ENCODE measurements at regions of chr9 and their contacts with region 1.

Region 1: DNA sequence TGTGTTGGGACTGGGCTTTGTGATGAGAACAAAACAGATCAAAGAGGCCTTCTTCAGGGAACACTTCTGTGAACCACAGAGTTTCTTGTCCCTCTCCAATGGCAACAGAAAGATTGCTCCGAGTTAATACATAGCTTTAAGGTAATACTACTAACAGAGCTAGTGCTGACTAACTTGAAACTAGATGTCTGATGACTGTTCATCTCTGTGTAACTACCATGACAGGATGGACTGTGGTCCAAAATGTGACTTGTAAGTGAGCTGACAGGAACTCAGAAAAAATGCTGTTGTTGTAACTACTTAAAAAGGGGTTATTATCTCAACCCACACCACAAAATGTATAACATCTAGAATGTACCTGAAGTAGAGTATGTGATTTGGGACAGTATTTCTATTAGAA is 630.2 kb upstream of the DMAC1 start:
- DNase-seq: no peak
- H3K4me3 Mint-ChIP-seq: no peak overlapping the region
- H3K27ac Mint-ChIP-seq: peak overlapping the region; percentile 78
- H3K4me1 Mint-ChIP-seq: peaks cover 40% of the 10 kb centered on the region
- H3K27me3 Mint-ChIP-seq: no peaks in the 10 kb centered on the region

Region 2: GRCh38 chr9:6894135-6894534 is 1535.6 kb before region 1 on chr9:
- intact Hi-C with region 1: loop called (anchors 5 kb)
- DNase-seq: no peak
- H3K4me3 Mint-ChIP-seq: peak overlapping the region; percentile 19
- H3K27ac Mint-ChIP-seq: peak overlapping the region; percentile 74
- H3K4me1 Mint-ChIP-seq: peaks cover 51% of the 10 kb centered on the region
- H3K27me3 Mint-ChIP-seq: no peaks in the 10 kb centered on the region

Region 3: GRCh38 chr9:7799234-7799943 is 630.4 kb before region 1 on chr9 and contains the start of gene DMAC1:
- intact Hi-C with region 1: loop called (anchors 2 kb)
- DNase-seq: peak; percentile 70
- H3K4me3 Mint-ChIP-seq: peak within 1 kb of the TSS; percentile 90
- H3K27ac Mint-ChIP-seq: peak within 1 kb of the TSS; percentile 89
- H3K4me1 Mint-ChIP-seq: peaks cover 23% of the 10 kb centered on the region
- H3K27me3 Mint-ChIP-seq: no peaks in the 10 kb centered on the region
- total RNA-seq, gene DMAC1: 50.5 and 51.0 TPM in 2 replicates

Region 4: DNA sequence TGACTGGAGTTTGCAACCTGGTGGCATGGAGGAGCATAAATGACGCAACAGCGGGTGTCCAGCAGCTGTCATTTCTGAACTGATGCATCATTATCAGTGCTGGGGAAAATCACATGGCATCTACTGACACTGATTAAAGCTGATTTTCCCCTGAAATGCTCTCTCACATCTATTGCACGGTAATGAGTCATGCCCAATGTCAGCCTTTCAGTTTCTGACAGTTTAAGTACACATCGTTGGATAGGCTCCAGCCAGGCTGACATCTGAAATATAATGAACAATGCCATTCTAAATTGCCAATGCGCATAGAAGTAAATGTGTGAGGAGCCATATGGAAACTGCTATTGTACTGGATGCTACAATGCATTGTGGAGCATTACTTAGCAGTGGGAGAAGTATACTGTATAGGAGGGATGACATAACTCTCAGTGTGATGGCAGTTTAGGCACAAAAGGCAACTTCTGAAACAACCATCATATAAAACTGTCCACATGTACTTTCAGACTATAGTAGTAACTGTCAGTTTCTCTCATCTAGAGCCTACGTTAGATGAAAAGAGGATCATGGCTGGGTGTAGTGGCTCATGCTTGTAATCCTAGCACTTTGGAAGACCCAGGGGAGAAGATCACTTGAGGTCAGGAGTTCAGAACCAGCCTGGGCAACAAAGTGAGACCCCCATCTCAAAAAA is 240.9 kb before region 1 on chr9:
- intact Hi-C with region 1: loop called (anchors 2 kb)
- DNase-seq: no peak
- H3K4me3 Mint-ChIP-seq: no peak overlapping the region
- H3K27ac Mint-ChIP-seq: peak overlapping the region; percentile 46
- H3K4me1 Mint-ChIP-seq: peaks cover 18% of the 10 kb centered on the region
- H3K27me3 Mint-ChIP-seq: no peaks in the 10 kb centered on the region

Region 5: DNA sequence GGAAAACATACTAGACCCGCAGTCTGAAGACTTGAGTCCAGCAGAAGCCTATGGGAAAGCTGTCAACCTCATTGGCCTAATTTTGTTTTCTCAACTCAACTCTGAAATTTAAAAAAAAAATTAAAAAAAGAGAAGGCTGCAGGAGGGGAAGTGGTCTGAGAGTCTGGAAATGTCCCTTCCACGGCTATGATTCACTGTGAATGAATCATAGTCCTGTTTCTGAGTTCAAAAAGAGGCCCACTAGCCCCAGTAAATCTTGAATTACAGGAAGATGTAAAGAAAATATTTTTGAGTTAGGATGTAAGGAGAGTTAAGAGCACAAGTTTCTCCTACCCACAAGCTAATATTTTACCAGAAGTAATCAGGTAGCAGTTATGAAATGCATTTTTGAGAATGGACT is 64.7 kb before region 1 on chr9:
- intact Hi-C with region 1: loop called (anchors 2 kb)
- DNase-seq: no peak
- H3K4me3 Mint-ChIP-seq: no peak overlapping the region
- H3K27ac Mint-ChIP-seq: peak overlapping the region; percentile 4
- H3K4me1 Mint-ChIP-seq: peaks cover 12% of the 10 kb centered on the region
- H3K27me3 Mint-ChIP-seq: no peaks in the 10 kb centered on the region

Region 6: DNA sequence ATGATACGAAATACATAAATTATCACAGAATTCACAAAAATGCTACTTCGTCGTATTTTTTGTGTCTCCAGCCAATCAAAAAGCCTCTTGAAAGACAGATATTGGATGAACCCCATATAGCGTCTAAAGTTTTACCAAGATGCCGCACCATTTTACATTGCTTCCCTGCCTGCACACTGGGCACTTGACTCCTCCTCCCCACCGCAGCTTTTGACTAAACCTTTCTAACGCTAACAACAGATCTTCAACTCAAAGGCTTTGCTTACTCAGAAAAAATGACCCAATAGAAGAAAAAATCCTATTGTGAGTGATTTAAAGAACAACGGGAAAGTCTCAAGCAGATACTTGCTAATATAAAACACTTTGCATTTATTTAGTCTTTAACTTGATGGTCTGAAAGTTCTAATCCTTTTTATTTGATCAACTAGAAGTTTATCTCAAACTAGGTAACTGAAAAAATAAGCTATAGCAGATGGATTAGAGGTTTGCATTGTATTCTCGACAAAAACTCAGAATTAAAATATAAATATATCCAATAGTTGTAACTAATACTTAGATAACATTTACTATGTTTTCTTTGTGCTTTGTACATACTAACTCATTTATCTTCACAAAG is 21.1 kb before region 1 on chr9:
- intact Hi-C with region 1: loop called (anchors 2 kb)
- DNase-seq: no peak
- H3K4me3 Mint-ChIP-seq: no peak overlapping the region
- H3K27ac Mint-ChIP-seq: no peak overlapping the region
- H3K4me1 Mint-ChIP-seq: peaks cover 17% of the 10 kb centered on the region
- H3K27me3 Mint-ChIP-seq: no peaks in the 10 kb centered on the region